Activated B cell treated with CpG ODN at 0.5 μM for 24 hours (primary cell): ENCODE measurements at regions of chr6 and their contacts with region 1.

Region 1: GRCh38 chr6:134456226-134456625 is 138.3 kb upstream of the SGK1 start:
- DNase-seq: no peak
- ATAC-seq: no peak
- H3K4me3 Mint-ChIP-seq: no peak overlapping the region
- H3K27ac Mint-ChIP-seq: no peak overlapping the region
- H3K4me1 Mint-ChIP-seq: no peaks in the 10 kb centered on the region
- H3K27me3 Mint-ChIP-seq: no peaks in the 10 kb centered on the region
- CTCF ChIP-seq: no peak

Region 2: DNA sequence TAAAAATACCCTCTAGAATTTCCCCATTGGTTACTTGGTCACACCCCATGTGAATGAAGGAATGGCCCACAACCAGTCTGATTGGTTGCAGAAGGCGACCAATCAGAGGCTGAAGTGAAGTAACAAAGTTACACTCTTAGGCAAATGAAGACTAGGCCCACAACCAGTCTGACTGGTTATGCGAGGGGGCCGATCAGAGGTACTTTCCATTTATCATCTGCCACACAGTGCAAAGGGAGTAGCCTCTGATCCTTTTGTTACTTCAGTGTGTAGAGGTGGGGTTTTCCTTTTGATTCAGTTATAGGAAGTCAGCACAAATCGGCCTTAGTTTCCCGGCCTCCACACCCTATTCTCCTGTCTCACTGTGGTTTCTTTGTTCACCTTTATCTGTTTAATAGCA is 77.1 kb before region 1 on chr6:
- CTCF ChIA-PET with region 1: no interaction called
- POLR2A ChIA-PET with region 1: interaction called, 13 read pairs
- intact Hi-C with region 1: no loop called
- DNase-seq: no peak
- ATAC-seq: peak; percentile 93
- H3K4me3 Mint-ChIP-seq: peak overlapping the region; percentile 6
- H3K27ac Mint-ChIP-seq: peak overlapping the region; percentile 73
- H3K4me1 Mint-ChIP-seq: peaks cover 26% of the 10 kb centered on the region
- H3K27me3 Mint-ChIP-seq: no peaks in the 10 kb centered on the region
- CTCF ChIP-seq: no peak

Region 3: DNA sequence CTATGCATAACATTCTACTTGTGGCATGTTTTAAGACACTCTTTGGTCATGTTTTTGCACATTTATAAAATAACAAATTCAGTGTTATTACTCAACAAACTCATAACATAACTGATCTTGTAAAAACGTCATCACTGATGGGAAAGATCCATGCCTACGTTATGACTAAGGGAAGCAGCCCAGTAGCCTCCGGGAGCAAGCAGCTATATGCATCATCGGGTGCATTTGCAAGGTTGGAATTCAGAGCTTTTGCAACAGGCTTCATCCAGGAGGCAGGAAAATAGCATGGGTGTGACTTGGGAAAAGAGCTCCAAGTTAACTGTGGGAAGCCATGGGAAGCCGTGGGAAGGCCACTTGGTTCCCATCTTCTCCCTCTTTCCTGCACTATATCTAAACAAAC is 133.3 kb after region 1 on chr6:
- CTCF ChIA-PET with region 1: no interaction called
- POLR2A ChIA-PET with region 1: no interaction called
- intact Hi-C with region 1: no loop called
- DNase-seq: no peak
- ATAC-seq: no peak
- H3K4me3 Mint-ChIP-seq: no peak overlapping the region
- H3K27ac Mint-ChIP-seq: no peak overlapping the region
- H3K4me1 Mint-ChIP-seq: no peaks in the 10 kb centered on the region
- H3K27me3 Mint-ChIP-seq: no peaks in the 10 kb centered on the region
- CTCF ChIP-seq: no peak